GM12878 (cell line): ENCODE measurements at regions of chr2 and their contacts with region 1.

Region 1: DNA sequence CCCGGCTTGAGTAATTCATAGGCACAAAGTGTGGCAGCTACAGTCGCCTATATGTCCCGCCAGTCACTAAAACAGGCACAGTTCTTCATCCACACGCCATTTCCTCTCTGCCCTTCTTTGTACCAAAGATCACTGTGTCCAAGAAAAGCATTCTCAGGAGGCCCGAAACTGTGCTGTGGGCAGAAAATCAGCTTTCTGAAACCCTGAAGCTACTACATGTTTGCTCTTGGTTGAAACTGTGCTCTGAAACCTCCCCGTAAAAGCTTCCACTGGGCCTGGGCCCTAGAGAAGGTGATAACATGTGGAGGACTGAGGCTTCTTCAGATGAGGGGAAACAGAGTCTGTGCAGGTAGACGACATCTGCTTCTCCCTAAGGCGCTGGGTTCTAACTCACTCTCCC is 75.6 kb upstream of the ID2 start:
- DNase-seq: peak; percentile 82
- ATAC-seq: peak; percentile 90
- H3K4me3 ChIP-seq: no peak overlapping the region
- H3K27ac ChIP-seq: peak overlapping the region; percentile 23
- H3K4me1 ChIP-seq: peaks cover 30% of the 10 kb centered on the region
- H3K27me3 ChIP-seq: no peaks in the 10 kb centered on the region
- CTCF ChIP-seq: no peak
- EP300 ChIP-seq: peak; percentile 38 to 40; a peak in 2 of 4 replicates
- POLR2A ChIP-seq: no peak
- RAD21 ChIP-seq: no peak

Region 2: GRCh38 chr2:8491296-8492027 is 114.8 kb before region 1 on chr2:
- CTCF ChIA-PET with region 1: no interaction called
- POLR2A ChIA-PET with region 1: no interaction called
- RAD21 ChIA-PET with region 1: no interaction called
- SMC1A ChIA-PET with region 1: no interaction called
- in situ Hi-C with region 1: no loop called
- intact Hi-C with region 1: no loop called
- DNase-seq: no peak
- ATAC-seq: no peak
- H3K4me3 ChIP-seq: no peak overlapping the region
- H3K27ac ChIP-seq: no peak overlapping the region
- H3K4me1 ChIP-seq: peaks cover 19% of the 10 kb centered on the region
- H3K27me3 ChIP-seq: no peaks in the 10 kb centered on the region
- CTCF ChIP-seq: no peak
- EP300 ChIP-seq: no peak
- POLR2A ChIP-seq: no peak
- RAD21 ChIP-seq: no peak

Region 3: GRCh38 chr2:8574144-8575037 is 31.8 kb before region 1 on chr2:
- CTCF ChIA-PET with region 1: no interaction called
- POLR2A ChIA-PET with region 1: interaction called, 6 read pairs
- RAD21 ChIA-PET with region 1: interaction called, 21 read pairs
- SMC1A ChIA-PET with region 1: interaction called, 20 read pairs
- in situ Hi-C with region 1: no loop called
- intact Hi-C with region 1: no loop called
- DNase-seq: no peak
- ATAC-seq: peak; percentile 77
- H3K4me3 ChIP-seq: peak overlapping the region; percentile 52; the same call in 1 of the 2 replicates
- H3K27ac ChIP-seq: peak overlapping the region; percentile 51
- H3K4me1 ChIP-seq: peaks cover 46% of the 10 kb centered on the region
- H3K27me3 ChIP-seq: no peaks in the 10 kb centered on the region
- CTCF ChIP-seq: 0 out of 6 replicates have a peak, but pooled peaks of 1 of the 3 experiments have one; percentile 9
- EP300 ChIP-seq: no peak
- POLR2A ChIP-seq: no peak
- RAD21 ChIP-seq: 0 out of 2 replicates have a peak, but pooled peaks have one; percentile 12

Region 4: GRCh38 chr2:8583400-8584173 is 22.6 kb before region 1 on chr2:
- CTCF ChIA-PET with region 1: interaction called, 4 read pairs
- POLR2A ChIA-PET with region 1: interaction called, 8 read pairs
- RAD21 ChIA-PET with region 1: interaction called, 5 read pairs
- SMC1A ChIA-PET with region 1: interaction called, 11 read pairs
- in situ Hi-C with region 1: no loop called
- intact Hi-C with region 1: no loop called
- DNase-seq: peak; percentile 80
- ATAC-seq: peak; percentile 95
- H3K4me3 ChIP-seq: peak overlapping the region; percentile 30; the same call in 1 of the 2 replicates
- H3K27ac ChIP-seq: peak overlapping the region; percentile 51; the same call in 1 of the 2 replicates
- H3K4me1 ChIP-seq: peaks cover 27% of the 10 kb centered on the region
- H3K27me3 ChIP-seq: no peaks in the 10 kb centered on the region
- CTCF ChIP-seq: no peak
- EP300 ChIP-seq: no peak
- POLR2A ChIP-seq: peak; percentile 52; the same call in 1 of the 2 replicates
- RAD21 ChIP-seq: no peak

Region 5: GRCh38 chr2:8590975-8591374 is 15.3 kb before region 1 on chr2:
- CTCF ChIA-PET with region 1: interaction called, 3 read pairs
- POLR2A ChIA-PET with region 1: interaction called, 8 read pairs
- RAD21 ChIA-PET with region 1: interaction called, 7 read pairs
- SMC1A ChIA-PET with region 1: interaction called, 12 read pairs
- in situ Hi-C with region 1: no loop called
- intact Hi-C with region 1: no loop called
- DNase-seq: no peak
- ATAC-seq: no peak
- H3K4me3 ChIP-seq: no peak overlapping the region
- H3K27ac ChIP-seq: no peak overlapping the region
- H3K4me1 ChIP-seq: peaks cover 7% of the 10 kb centered on the region
- H3K27me3 ChIP-seq: no peaks in the 10 kb centered on the region; a peak in 1 of 4 replicates
- CTCF ChIP-seq: no peak
- EP300 ChIP-seq: no peak
- POLR2A ChIP-seq: no peak
- RAD21 ChIP-seq: no peak

Region 6: DNA sequence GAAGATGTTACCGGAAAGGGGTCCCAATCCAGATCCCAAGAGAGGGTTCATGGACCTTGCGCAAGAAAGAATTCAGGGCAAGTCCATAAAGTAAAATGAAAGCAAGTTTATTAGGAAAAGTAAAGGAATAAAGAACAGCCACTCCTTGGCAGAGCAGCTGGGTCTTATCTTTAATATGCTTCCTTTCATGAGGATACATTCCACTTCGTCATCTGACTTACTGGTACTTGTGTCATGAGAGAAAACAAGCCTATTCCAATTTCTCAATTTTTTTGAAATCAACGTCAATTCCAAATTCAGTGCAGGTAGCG is 14.8 kb after region 1 on chr2:
- CTCF ChIA-PET with region 1: interaction called, 3 read pairs
- POLR2A ChIA-PET with region 1: interaction called, 6 read pairs
- RAD21 ChIA-PET with region 1: interaction called, 16 read pairs
- SMC1A ChIA-PET with region 1: interaction called, 40 read pairs
- in situ Hi-C with region 1: no loop called
- intact Hi-C with region 1: no loop called
- DNase-seq: no peak
- ATAC-seq: no peak
- H3K4me3 ChIP-seq: no peak overlapping the region
- H3K27ac ChIP-seq: no peak overlapping the region
- H3K4me1 ChIP-seq: no peaks in the 10 kb centered on the region
- H3K27me3 ChIP-seq: peaks cover 0 to 8% of the 10 kb centered on the region in 2 experiments; a peak in 2 of 4 replicates
- CTCF ChIP-seq: no peak
- EP300 ChIP-seq: no peak
- POLR2A ChIP-seq: no peak
- RAD21 ChIP-seq: no peak

Region 7: DNA sequence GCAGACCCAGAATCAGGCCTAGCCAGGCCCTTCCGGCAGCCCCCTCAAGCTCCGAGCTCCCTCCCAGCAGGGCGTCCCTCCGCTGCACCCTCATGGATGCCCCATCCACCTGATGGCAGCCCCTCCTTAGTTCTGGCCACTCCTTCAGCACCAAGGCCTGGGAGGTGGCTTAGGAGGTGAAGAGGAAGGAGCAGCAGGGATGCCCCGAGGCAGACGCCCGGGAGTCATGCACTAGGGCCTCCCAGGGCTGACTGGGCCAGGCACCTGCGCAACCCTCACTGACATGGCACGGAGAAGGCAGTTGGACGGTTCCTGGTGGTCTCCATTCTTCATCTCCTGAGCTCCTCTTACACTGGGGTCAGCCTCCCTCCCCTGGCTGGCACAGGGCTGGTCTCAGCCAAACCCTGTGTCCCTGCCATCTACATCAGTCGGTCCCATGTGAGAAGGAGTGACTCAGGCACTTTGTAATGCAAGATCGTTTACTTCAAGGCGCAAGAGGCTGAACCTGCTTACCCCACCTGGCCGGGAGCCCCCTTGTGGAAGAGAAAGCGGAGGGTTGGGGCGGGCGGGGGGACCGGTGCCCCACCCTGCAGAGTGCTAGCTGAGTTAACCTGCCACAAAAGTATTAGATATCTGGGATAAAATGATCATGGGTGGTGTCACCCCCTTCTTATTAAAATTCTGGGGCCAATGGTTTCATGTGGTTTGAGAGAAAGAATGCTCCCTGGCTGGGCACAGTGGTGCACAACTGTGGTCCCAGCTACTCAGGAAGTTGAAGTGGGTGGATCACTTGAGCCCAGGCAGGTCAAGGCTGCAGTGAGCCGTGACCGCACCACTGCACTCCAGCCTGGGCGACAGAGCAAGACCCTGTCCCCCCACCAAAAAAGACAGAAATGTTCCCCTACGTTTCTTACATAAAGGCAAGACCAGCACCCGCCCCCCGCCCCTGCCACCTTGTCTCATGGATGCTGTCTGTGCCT is 22.3 kb after region 1 on chr2:
- CTCF ChIA-PET with region 1: no interaction called
- POLR2A ChIA-PET with region 1: interaction called, 4 read pairs
- RAD21 ChIA-PET with region 1: interaction called, 4 read pairs
- SMC1A ChIA-PET with region 1: interaction called, 40 read pairs
- in situ Hi-C with region 1: no loop called
- intact Hi-C with region 1: no loop called
- DNase-seq: no peak
- ATAC-seq: peak; percentile 84
- H3K4me3 ChIP-seq: no peak overlapping the region
- H3K27ac ChIP-seq: no peak overlapping the region
- H3K4me1 ChIP-seq: peaks cover 9% of the 10 kb centered on the region; the same call in 1 of the 2 replicates
- H3K27me3 ChIP-seq: peaks cover 0 to 3% of the 10 kb centered on the region in 2 experiments; a peak in 1 of 4 replicates
- CTCF ChIP-seq: peak; percentile 8 to 23 (median 15); a peak in 2 of 6 replicates
- EP300 ChIP-seq: no peak
- POLR2A ChIP-seq: no peak
- RAD21 ChIP-seq: peak; percentile 12; the same call in 1 of the 2 replicates